Posterior vena cava (tissue), 2 donors: ENCODE measurements at regions of chr5 and their contacts with region 1.

Region 1: GRCh38 chr5:10283927-10284635 is 23.6 kb downstream of the CMBL start:
- DNase-seq: peak; percentile 96

Region 2: DNA sequence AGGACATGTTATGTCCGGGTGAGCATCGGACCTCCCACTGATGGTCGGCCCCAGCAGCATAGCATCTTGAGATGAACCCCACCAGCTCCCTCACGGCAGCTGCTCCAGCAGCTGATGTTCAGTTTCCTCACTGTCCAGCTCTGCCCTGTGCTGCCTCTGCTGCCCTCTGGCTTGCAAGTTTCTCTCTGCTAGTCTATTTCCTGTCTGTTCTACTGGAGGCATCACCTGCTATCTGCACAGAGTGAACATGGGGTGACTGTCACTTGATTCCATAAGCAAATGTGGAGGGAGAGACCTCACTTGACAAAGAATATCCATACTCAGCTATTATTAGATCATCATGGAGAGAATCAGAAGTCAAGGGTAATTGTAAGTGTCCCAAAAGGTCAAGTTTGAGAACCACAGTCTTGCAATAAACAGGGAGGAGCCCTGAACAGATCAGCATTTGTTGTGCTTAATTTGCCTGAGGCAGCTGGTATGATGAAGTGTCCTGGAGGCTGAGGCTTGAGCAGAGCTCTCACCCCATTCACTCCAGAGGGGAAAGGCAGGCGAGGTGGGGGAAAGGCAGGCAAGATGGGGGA is 1441.0 kb before region 1 on chr5:
- intact Hi-C with region 1: no loop called
- DNase-seq: no peak

Region 3: DNA sequence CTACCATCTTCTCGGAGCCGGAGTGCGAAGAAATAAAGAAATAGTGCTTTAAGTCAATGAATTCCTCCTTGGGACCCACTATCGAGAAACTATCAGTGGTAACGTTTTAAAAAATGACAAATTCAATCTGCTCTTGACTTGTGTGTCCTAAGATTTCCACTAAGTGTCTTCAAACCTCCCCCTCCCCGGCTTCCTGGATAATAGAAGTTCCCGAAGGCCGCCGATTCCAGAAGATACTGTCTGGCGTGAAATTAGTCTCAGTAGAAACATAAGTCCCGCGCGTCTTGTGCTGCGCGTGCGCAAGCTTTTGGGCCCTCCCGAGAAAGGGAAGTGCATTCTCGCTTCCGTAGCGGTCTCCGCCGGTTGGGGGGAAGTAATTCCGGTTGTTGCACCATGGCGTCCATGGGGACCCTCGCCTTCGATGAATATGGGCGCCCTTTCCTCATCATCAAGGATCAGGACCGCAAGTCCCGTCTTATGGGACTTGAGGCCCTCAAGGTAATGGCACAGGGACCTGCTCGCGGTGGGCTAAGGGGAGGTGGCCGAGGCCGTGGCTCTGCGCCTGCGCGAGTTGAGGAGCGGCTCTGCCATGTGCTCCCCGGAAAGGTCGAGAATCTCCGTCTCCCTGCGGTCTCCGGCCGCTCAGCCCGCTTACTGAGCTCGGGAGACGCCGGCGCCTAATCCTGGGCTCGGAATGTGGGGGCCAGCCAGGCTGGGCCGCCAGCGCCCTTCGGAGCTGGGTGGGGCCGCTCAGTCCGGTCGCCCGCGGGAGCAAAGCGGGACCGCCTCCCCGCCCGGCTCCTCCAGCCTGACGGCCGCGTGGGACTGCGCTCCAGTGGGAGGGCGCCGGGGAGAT is 33.9 kb before region 1 on chr5 and contains the start of gene CCT5:
- intact Hi-C with region 1: no loop called
- DNase-seq: peak; percentile 98
- total RNA-seq, gene CCT5: 97.0 to 124 TPM

Region 4: GRCh38 chr5:10424124-10424731 is 140.1 kb after region 1 on chr5:
- intact Hi-C with region 1: loop called (anchors 10 kb)
- DNase-seq: no peak